Left ventricle myocardium inferior (tissue), 1 donor: ENCODE measurements at regions of chr9 and their contacts with region 1.

Region 1: DNA sequence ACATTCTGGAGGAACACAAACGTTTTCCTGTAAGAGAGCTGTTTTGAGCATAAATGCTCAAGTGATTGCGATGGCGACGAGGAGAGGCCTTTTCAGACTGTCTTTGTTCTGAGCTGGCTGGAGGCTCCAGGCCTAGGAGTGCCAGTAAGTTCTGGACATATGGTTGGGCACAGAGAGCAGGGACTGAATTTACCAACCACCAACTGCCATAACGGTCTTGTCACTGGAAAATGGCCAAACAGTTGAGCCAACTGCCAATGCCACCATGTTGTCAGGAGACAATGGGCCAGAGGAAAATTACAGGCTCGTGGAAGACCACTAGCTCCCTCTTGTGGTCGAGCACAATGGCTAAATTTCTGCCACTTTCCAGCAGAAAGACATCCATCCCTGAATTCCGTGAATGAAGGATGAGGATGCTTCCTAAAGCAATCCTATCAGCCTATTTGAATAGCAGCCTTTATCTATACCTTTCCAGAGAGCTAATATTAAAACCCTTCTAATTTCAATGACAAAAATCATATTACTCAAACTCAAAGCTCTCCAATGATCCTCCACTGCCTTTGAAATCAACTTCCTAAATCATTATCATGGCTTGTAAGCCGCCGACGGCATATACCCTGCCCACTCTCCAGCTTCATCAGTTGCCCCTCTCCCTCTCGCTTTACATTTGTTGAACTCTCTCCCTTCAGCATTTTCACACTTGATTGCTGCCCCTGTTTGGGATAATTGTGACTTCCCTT is 66.9 kb upstream of the GLIS3 start:
- DNase-seq: no peak
- H3K4me3 ChIP-seq: no peak overlapping the region
- H3K27ac ChIP-seq: no peak overlapping the region
- H3K4me1 ChIP-seq: no peaks in the 10 kb centered on the region
- H3K27me3 ChIP-seq: no peaks in the 10 kb centered on the region
- CTCF ChIP-seq: peak; percentile 69

Region 2: GRCh38 chr9:4315582-4316215 is 51.1 kb before region 1 on chr9:
- intact Hi-C with region 1: loop called (anchors 2 kb)
- DNase-seq: peak; percentile 79
- H3K4me3 ChIP-seq: no peak overlapping the region
- H3K27ac ChIP-seq: no peak overlapping the region
- H3K4me1 ChIP-seq: peaks cover 10% of the 10 kb centered on the region
- H3K27me3 ChIP-seq: no peaks in the 10 kb centered on the region
- CTCF ChIP-seq: peak; percentile 88